ENCODE measurements at regions of chr1 and their contacts with region 1.

Region 1: GRCh38 chr1:39538588-39539465 is 37.8 kb downstream of the PABPC4 start:
- DNase-seq: peak; percentile 52 to 67 (median 65)
- H3K4me3 ChIP-seq: no peak overlapping the region
- H3K27ac ChIP-seq: no peak overlapping the region
- H3K4me1 ChIP-seq: no peaks in the 10 kb centered on the region
- H3K27me3 ChIP-seq: no peaks in the 10 kb centered on the region

Region 2: GRCh38 chr1:39494671-39495410 is 44.0 kb before region 1 on chr1:
- CTCF ChIA-PET with region 1: interaction called, 10 read pairs
- POLR2A ChIA-PET with region 1: no interaction called
- DNase-seq: no peak
- H3K4me3 ChIP-seq: no peak overlapping the region
- H3K27ac ChIP-seq: no peak overlapping the region
- H3K4me1 ChIP-seq: peaks cover 0 to 15% (median 12%) of the 10 kb centered on the region in 4 experiments
- H3K27me3 ChIP-seq: peaks cover 0 to 46% (median 11%) of the 10 kb centered on the region in 5 experiments

Region 3: DNA sequence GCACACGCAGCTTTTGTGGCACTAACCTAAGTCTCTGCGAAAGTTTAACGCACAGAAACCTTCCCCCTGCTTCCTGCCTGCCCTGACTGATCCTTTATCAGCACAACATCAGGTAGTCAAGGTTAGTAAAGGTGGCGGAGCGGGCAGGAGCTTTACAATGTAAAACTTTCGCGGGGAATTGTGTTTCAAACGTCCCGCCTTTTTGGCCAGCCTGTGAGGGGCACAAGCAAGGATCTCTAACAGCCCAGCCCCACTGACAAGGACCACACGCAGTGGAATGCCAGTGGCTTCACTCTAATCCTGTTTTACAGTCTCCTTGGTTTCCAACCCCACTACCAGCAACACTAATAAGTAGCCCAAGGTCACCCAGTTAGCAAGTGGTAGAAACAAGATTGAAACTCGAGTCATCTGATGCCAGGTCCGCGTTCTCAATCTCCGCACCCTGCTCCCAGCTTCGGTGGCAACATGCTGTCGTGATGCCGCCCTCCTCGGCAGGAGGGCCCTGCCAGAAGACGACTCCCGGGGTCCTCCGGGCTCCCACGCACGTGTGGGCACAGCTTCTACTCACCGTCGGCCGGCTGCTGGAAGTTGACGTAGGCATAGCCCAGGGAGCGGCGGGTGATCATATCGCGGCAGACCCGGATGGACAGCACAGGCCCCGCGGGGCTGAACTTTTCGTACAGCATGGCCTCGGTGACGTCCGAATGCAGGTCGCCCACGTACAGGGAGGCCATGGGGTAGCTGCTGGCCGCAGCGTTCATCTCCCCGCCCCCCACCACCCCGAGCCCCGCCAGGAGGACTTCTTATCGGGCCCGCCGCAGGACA is 36.6 kb after region 1 on chr1:
- CTCF ChIA-PET with region 1: no interaction called
- POLR2A ChIA-PET with region 1: no interaction called
- DNase-seq: peak; percentile 22 to 62 (median 45)
- H3K4me3 ChIP-seq: peak overlapping the region; percentile 69 to 87 (median 80)
- H3K27ac ChIP-seq: peak overlapping the region in 1 of 2 experiments; percentile 81
- H3K4me1 ChIP-seq: peaks cover 3 to 29% (median 22%) of the 10 kb centered on the region in 4 experiments
- H3K27me3 ChIP-seq: no peaks in the 10 kb centered on the region